IMR-90 (cell line): ENCODE measurements at regions of chr12 and their contacts with region 1.

Region 1: DNA sequence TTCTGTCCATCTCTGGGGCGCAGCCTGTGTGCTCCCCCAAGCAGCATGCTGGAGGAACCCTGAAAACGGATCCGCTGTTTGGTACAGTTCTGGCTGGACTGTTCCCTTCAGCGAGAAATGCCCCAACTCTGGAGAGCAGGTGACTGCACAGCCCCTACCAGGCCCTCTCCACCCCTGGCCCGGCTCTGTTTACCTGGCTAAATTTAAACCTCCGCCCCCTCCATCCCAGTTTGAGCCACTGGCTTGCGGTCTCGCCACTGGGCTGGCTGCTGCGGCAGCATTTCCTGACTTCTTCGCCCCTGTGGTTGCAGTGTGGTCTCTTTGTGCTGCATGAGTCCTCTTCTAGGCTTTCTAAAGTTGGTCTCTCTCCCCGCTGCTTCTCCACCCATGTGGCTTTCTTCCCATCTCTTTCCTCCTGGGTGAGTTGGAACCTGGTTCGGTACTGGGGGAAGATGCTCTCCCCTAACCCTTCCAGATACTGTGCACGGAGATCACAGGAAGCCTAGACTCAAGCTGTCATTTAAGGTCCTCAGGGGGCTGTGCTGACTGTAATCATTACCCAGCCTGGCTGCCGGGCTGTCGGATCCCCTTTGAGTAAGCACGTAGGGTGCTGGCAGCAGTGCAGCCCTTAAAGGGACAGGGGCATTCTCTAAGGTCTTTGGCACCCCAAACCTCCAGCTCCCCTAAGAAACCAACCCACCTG is 60.6 kb downstream of the FBXL14 start:
- DNase-seq: peak; percentile 43
- ATAC-seq: no peak
- H3K4me3 ChIP-seq: peak overlapping the region; percentile 13; the same call in 1 of the 2 replicates
- H3K27ac ChIP-seq: no peak overlapping the region
- H3K4me1 ChIP-seq: peaks cover 44% of the 10 kb centered on the region
- H3K27me3 ChIP-seq: no peaks in the 10 kb centered on the region
- CTCF ChIP-seq: no peak
- POLR2A ChIP-seq: no peak
- RAD21 ChIP-seq: no peak

Region 2: DNA sequence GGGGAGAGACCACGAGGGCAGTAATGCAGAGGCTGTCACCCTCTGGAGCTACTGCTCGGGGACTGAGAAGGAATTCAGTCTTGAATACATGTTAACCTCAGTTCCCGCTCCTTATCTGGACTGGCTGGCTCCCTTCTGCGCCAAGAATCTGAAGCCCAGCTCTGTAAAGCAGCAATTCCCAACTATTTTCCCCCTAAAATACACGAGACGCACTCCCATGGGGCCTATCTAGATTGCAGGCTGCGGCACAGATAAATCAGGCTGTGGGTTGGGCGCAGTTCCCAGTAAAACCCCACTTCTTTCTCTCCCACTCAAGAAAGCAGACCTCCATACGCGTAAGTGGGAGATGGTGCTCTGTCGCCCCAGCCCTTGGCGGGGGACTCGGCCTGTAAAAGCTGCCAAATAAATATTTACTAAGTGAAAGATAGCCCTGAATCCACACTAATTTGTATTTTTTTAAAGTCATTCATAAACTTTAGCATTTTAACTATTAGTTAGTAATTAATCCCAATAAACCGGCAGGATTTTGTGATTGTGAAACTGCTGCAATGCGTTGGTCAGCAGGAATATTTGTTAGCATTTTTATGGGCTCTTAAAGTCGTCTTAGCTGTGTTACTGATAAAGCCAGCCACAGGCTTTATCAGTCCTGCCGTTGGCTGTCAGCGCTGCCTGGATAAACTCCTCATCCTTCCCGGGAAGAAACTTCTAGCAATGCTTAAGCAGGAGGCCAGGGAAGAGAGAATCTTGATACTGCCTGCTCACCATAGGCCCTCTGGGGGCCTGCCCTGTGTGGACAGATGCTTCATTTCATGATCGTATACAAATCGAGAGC is 42.9 kb after region 1 on chr12:
- CTCF ChIA-PET with region 1: no interaction called
- POLR2A ChIA-PET with region 1: no interaction called
- dilution Hi-C with region 1: no loop called
- in situ Hi-C with region 1: no loop called
- intact Hi-C with region 1: loop called (anchors 5 kb)
- DNase-seq: peak; percentile 85
- ATAC-seq: peak; percentile 68
- H3K4me3 ChIP-seq: peak overlapping the region; percentile 5; the same call in 1 of the 2 replicates
- H3K27ac ChIP-seq: peak overlapping the region; percentile 78
- H3K4me1 ChIP-seq: peaks cover 30% of the 10 kb centered on the region
- H3K27me3 ChIP-seq: no peaks in the 10 kb centered on the region
- CTCF ChIP-seq: no peak
- POLR2A ChIP-seq: no peak
- RAD21 ChIP-seq: peak; percentile 39

Region 3: GRCh38 chr12:1719139-1719538 is 185.4 kb after region 1 on chr12:
- CTCF ChIA-PET with region 1: no interaction called
- POLR2A ChIA-PET with region 1: no interaction called
- dilution Hi-C with region 1: no loop called
- in situ Hi-C with region 1: no loop called
- intact Hi-C with region 1: no loop called
- DNase-seq: no peak
- ATAC-seq: no peak
- H3K4me3 ChIP-seq: no peak overlapping the region
- H3K27ac ChIP-seq: no peak overlapping the region
- H3K4me1 ChIP-seq: peaks cover 2% of the 10 kb centered on the region; the same call in 1 of the 2 replicates
- H3K27me3 ChIP-seq: no peaks in the 10 kb centered on the region
- CTCF ChIP-seq: no peak
- POLR2A ChIP-seq: no peak
- RAD21 ChIP-seq: no peak